ENCODE measurements at regions of chr1 and their contacts with region 1.

Region 1: DNA sequence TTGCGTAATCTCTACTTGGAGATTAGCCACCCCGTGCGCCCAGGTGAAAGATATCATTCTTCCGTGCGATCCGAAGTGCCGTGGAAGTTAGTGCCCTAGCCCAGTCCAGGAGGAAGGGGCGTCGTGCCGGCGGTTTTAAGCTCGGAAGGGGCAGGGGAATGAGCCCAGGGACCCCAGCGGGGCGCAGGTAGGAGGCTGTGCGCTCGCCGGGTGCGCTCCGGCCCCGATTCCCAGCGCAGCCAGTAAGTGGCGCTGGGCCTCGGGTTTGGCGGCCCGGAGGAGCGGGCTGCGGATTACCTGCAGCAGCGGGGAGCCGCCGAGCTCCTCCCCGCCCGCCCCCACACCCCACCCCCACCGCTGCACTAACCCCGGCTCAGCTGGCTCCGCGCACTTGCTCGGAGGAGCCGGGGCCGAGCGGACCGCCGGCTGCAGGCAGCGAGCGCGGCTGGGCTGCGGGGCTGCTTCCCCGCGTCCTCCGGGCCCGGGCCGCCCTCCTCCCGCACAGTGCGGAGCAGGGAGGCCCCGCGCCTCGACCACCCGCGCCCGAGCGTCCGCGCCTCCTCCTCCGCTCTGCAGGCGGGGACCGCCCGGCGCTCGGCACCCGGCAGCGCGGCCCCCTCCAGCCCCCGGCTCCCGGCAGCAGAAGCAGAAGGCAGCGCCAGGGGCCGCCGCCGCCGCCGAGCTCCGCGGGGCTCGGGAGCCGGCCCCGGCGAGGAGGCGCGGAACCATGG is at the start of gene RYR2:
- DNase-seq: no peak
- H3K4me3 ChIP-seq: peak within 1 kb of the TSS; percentile 27 to 39
- H3K27ac ChIP-seq: no peak within 1 kb of the TSS
- H3K4me1 ChIP-seq: no peaks in the 10 kb centered on the region
- H3K27me3 ChIP-seq: peaks cover 8% of the 10 kb centered on the region
- CTCF ChIP-seq: peak in 2 of 4 experiments; percentile 17 to 30
- POLR2A ChIP-seq: no peak
- total RNA-seq, gene RYR2: 2.9 to 6.7 TPM

Region 2: GRCh38 chr1:236581528-236581927 is 460.4 kb before region 1 on chr1:
- intact Hi-C with region 1: no loop called
- DNase-seq: no peak
- H3K4me3 ChIP-seq: no peak overlapping the region
- H3K27ac ChIP-seq: no peak overlapping the region
- H3K4me1 ChIP-seq: no peaks in the 10 kb centered on the region
- H3K27me3 ChIP-seq: no peaks in the 10 kb centered on the region
- CTCF ChIP-seq: no peak
- POLR2A ChIP-seq: no peak

Region 3: DNA sequence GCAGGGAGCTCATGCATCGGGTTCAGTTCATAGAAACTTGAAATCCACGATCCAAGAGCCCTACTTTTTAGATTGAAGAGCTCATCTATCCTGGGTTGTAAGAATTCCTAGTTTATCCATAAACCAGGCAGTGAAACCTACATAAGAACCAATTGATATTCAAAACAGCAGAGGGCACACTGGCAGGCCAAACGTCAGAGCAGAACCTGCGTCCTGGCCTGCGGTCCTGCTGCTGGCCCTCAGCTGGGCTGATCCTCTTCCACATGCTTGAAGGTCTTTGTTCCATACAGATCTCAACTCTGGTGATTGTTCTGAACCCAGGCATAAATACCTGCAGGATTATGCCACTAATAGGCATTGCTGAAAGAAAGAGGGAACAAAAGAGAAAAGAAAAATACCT is 84.7 kb before region 1 on chr1:
- intact Hi-C with region 1: no loop called
- DNase-seq: no peak
- H3K4me3 ChIP-seq: no peak overlapping the region
- H3K27ac ChIP-seq: no peak overlapping the region
- H3K4me1 ChIP-seq: no peaks in the 10 kb centered on the region
- H3K27me3 ChIP-seq: no peaks in the 10 kb centered on the region
- CTCF ChIP-seq: no peak
- POLR2A ChIP-seq: no peak

Region 4: GRCh38 chr1:237012788-237013383 is 29.1 kb before region 1 on chr1:
- intact Hi-C with region 1: loop called (anchors 5 kb)
- DNase-seq: no peak
- H3K4me3 ChIP-seq: no peak overlapping the region
- H3K27ac ChIP-seq: no peak overlapping the region
- H3K4me1 ChIP-seq: no peaks in the 10 kb centered on the region
- H3K27me3 ChIP-seq: no peaks in the 10 kb centered on the region
- CTCF ChIP-seq: no peak
- POLR2A ChIP-seq: no peak

Region 5: GRCh38 chr1:237071641-237072420 is 29.9 kb after region 1 on chr1:
- intact Hi-C with region 1: no loop called
- DNase-seq: no peak
- H3K4me3 ChIP-seq: no peak overlapping the region
- H3K27ac ChIP-seq: no peak overlapping the region
- H3K4me1 ChIP-seq: no peaks in the 10 kb centered on the region
- H3K27me3 ChIP-seq: no peaks in the 10 kb centered on the region
- CTCF ChIP-seq: no peak
- POLR2A ChIP-seq: no peak

Region 6: GRCh38 chr1:237249120-237249519 is 207.2 kb after region 1 on chr1:
- intact Hi-C with region 1: loop called (anchors 10 kb)
- DNase-seq: no peak
- H3K4me3 ChIP-seq: no peak overlapping the region
- H3K27ac ChIP-seq: no peak overlapping the region
- H3K4me1 ChIP-seq: no peaks in the 10 kb centered on the region
- H3K27me3 ChIP-seq: no peaks in the 10 kb centered on the region
- CTCF ChIP-seq: no peak
- POLR2A ChIP-seq: no peak

Region 7: DNA sequence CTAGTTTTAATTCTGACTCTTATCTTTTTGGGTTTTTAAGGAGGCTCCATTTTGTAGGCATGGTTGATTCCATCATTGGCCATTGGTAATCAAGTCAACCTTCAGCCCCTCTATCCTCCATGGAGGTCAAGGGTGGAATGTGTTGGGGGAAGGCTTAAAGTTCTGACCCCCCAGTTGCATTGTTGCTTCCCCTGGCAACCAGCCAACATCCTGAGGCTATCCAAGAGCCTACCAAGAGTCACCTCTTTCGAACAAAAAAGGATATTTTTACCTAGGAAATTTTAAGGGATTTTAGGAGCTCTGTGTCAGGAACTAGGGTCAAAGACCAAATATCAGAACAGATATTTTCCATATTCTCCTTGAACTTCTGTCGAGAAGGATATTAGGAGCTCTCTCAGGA is 251.8 kb after region 1 on chr1:
- intact Hi-C with region 1: loop called (anchors 10 kb)
- DNase-seq: no peak
- H3K4me3 ChIP-seq: no peak overlapping the region
- H3K27ac ChIP-seq: no peak overlapping the region
- H3K4me1 ChIP-seq: no peaks in the 10 kb centered on the region
- H3K27me3 ChIP-seq: no peaks in the 10 kb centered on the region
- CTCF ChIP-seq: no peak
- POLR2A ChIP-seq: no peak

Region 8: GRCh38 chr1:237386362-237387143 is 344.6 kb after region 1 on chr1:
- intact Hi-C with region 1: loop called (anchors 2 kb)
- DNase-seq: no peak
- H3K4me3 ChIP-seq: no peak overlapping the region
- H3K27ac ChIP-seq: no peak overlapping the region
- H3K4me1 ChIP-seq: no peaks in the 10 kb centered on the region
- H3K27me3 ChIP-seq: no peaks in the 10 kb centered on the region
- CTCF ChIP-seq: peak; percentile 28 to 58 (median 39)
- POLR2A ChIP-seq: no peak

Region 9: GRCh38 chr1:238111516-238111915 is 1069.6 kb after region 1 on chr1:
- intact Hi-C with region 1: no loop called
- DNase-seq: no peak
- H3K4me3 ChIP-seq: no peak overlapping the region
- H3K27ac ChIP-seq: no peak overlapping the region
- H3K4me1 ChIP-seq: no peaks in the 10 kb centered on the region
- H3K27me3 ChIP-seq: no peaks in the 10 kb centered on the region
- CTCF ChIP-seq: no peak
- POLR2A ChIP-seq: no peak